Activated naive CD8-positive, alpha-beta T cell treated with anti-CD3 and anti-CD28 coated beads, Interleukin-2, amount 10 ng/mL, durations not matched to agents 7 days and 5 days (primary cell): ENCODE measurements at regions of chr19 and their contacts with region 1.

Region 1: GRCh38 chr19:17859533-17860330 is at the start of gene RPL18A:
- DNase-seq: peak; percentile 94
- ATAC-seq: peak; percentile 94
- H3K4me3 Mint-ChIP-seq: peak within 1 kb of the TSS; percentile 95
- H3K27ac Mint-ChIP-seq: peak within 1 kb of the TSS; percentile 91
- H3K4me1 Mint-ChIP-seq: peaks cover 23% of the 10 kb centered on the region
- H3K27me3 Mint-ChIP-seq: no peaks in the 10 kb centered on the region
- total RNA-seq, gene RPL18A: 2,260 to 2,272 TPM

Region 2: DNA sequence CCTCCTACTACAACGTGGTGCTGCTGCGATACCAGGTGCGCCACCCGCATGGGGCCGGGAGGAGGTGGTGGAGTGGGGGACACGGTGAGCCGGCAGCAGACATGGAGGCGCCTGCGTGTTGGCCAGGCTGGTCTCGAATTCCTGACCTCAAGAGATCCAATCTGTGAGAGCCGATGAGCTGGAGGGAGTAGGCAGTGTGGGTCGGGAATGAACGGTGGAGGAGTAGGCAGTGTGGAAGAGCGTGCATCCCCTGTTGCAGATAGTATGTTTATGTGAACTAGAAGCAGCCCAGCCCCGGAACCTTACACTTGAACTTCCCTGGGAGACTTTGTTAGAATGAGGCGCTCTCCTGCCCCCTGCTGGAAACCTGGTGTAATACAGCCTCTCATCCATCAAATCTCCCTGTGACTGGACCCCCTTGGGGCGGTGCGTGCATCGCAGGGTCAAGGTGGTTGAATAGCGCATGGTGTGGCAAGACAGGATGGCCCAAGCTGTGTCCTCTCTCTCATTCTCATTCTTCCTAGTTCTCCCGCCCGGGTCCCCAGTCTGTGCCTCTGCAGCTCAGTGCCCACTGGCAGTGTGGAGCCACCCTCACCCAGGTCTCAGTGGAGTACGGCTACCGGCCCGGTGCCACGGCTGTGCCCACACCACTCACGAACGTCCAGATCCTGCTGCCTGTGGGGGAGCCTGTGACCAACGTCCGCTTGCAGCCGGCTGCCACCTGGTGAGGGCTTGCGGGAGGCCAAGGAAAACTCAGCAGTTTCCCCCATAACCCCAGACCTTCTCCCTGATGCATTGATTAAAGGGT is 75.3 kb before region 1 on chr19:
- POLR2A ChIA-PET with region 1: no interaction called
- DNase-seq: peak; percentile 75
- ATAC-seq: peak; percentile 59
- H3K4me3 Mint-ChIP-seq: no peak overlapping the region
- H3K27ac Mint-ChIP-seq: no peak overlapping the region
- H3K4me1 Mint-ChIP-seq: peaks cover 12% of the 10 kb centered on the region
- H3K27me3 Mint-ChIP-seq: no peaks in the 10 kb centered on the region

Region 3: GRCh38 chr19:17847538-17848366 is 12.0 kb before region 1 on chr19 and contains the start of gene JAK3:
- POLR2A ChIA-PET with region 1: interaction called, 20 read pairs
- DNase-seq: peak; percentile 86
- ATAC-seq: peak; percentile 84
- H3K4me3 Mint-ChIP-seq: peak within 1 kb of the TSS; percentile 94
- H3K27ac Mint-ChIP-seq: peak within 1 kb of the TSS; percentile 94
- H3K4me1 Mint-ChIP-seq: peaks cover 48% of the 10 kb centered on the region
- H3K27me3 Mint-ChIP-seq: no peaks in the 10 kb centered on the region
- total RNA-seq, gene JAK3: 119 to 122 TPM

Region 4: GRCh38 chr19:17871878-17872250 is 12.1 kb after region 1 on chr19 and contains the start of gene SLC5A5:
- POLR2A ChIA-PET with region 1: interaction called, 44 read pairs
- DNase-seq: peak; percentile 67
- ATAC-seq: peak; percentile 22
- H3K4me3 Mint-ChIP-seq: peak within 1 kb of the TSS; percentile 93
- H3K27ac Mint-ChIP-seq: peak within 1 kb of the TSS; percentile 85
- H3K4me1 Mint-ChIP-seq: peaks cover 12% of the 10 kb centered on the region
- H3K27me3 Mint-ChIP-seq: no peaks in the 10 kb centered on the region
- total RNA-seq, gene SLC5A5: 1.8 to 2.2 TPM

Region 5: DNA sequence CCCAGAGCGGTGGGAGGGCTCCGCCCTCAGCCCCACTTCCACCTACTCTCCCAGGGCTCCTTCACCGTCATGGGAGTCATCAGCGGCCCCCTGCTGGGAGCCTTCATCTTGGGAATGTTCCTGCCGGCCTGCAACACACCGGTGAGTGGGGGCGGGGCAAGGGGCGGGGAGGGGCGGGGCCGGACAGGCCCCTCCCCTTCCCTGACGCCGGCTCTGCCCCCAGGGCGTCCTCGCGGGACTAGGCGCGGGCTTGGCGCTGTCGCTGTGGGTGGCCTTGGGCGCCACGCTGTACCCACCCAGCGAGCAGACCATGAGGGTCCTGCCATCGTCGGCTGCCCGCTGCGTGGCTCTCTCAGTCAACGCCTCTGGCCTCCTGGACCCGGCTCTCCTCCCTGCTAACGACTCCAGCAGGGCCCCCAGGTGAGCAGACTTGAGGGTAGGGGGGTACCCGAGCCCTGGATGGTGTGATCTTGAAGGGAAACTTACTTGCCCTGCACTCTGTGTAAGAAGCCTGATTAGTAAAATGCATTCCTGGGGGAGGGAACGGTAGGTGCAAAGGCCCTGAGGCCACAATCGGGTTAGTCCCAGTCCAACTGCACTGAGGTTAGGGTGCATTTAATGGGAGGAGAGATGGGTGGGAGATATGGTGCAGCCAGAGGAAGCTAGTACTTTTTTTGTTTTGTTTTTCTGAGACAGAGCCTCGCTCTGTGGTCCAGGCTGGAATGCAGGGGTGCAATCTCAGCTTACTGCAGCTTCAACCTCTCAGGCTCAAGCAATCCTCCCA is 24.1 kb after region 1 on chr19:
- POLR2A ChIA-PET with region 1: no interaction called
- DNase-seq: no peak
- ATAC-seq: no peak
- H3K4me3 Mint-ChIP-seq: no peak overlapping the region
- H3K27ac Mint-ChIP-seq: no peak overlapping the region
- H3K4me1 Mint-ChIP-seq: peaks cover 1% of the 10 kb centered on the region
- H3K27me3 Mint-ChIP-seq: no peaks in the 10 kb centered on the region